PC-3 (cell line): ENCODE measurements at regions of chr3 and their contacts with region 1.

Region 1: GRCh38 chr3:125443923-125444322 is 68.8 kb upstream of the ZNF148 start:
- DNase-seq: peak; percentile 19
- ATAC-seq: peak; percentile 48
- H3K4me3 ChIP-seq: no peak overlapping the region
- H3K27ac ChIP-seq: no peak overlapping the region
- H3K4me1 ChIP-seq: 0 out of 2 replicates have a peak, but pooled peaks cover 2% of the 10 kb centered on the region
- H3K27me3 ChIP-seq: no peaks in the 10 kb centered on the region
- CTCF ChIP-seq: no peak

Region 2: DNA sequence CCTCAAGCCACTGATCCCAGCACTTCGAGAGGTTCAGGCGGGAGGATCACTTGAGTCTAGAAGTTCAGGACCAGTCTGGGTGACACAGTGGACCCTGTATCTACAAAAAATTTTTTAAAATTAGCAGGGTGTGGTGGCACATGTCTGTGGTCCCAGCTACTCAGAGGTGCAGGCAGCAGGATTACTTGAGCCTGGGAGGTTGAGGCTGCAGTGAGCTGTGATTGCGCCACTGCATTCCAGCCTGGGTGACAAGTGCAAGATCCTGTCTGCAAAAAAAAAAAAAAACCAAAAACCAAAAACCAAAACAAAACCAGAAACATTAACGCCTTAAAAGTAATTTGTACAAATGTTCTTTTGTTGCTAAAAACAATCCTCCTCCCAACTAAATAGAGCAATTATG is 203.4 kb before region 1 on chr3:
- CTCF ChIA-PET with region 1: no interaction called
- POLR2A ChIA-PET with region 1: no interaction called
- intact Hi-C with region 1: no loop called
- DNase-seq: no peak
- ATAC-seq: no peak
- H3K4me3 ChIP-seq: no peak overlapping the region
- H3K27ac ChIP-seq: no peak overlapping the region
- H3K4me1 ChIP-seq: no peaks in the 10 kb centered on the region
- H3K27me3 ChIP-seq: no peaks in the 10 kb centered on the region
- CTCF ChIP-seq: no peak

Region 3: DNA sequence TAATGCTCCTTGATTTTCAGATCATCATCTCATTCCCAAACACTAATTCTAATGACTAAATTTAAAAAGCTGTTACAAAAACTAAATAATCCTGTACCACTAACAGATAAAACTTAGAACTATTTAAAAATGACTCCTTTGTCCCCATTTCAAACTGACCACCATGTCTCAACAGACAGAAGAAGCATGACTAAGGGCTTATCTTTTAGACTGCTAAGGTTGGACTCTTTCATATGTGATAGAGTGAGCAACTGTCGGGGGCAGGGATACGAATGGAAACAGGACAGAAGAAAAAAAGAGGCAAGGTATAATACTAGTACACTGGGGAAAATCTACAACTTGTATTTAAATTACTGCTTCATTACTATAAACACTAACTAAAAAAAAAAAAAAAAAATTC is 52.8 kb after region 1 on chr3:
- CTCF ChIA-PET with region 1: no interaction called
- POLR2A ChIA-PET with region 1: no interaction called
- intact Hi-C with region 1: no loop called
- DNase-seq: no peak
- ATAC-seq: no peak
- H3K4me3 ChIP-seq: no peak overlapping the region
- H3K27ac ChIP-seq: no peak overlapping the region
- H3K4me1 ChIP-seq: peaks cover 5% of the 10 kb centered on the region; the same call in 1 of the 2 replicates
- H3K27me3 ChIP-seq: no peaks in the 10 kb centered on the region
- CTCF ChIP-seq: no peak

Region 4: GRCh38 chr3:125585595-125586223 is 141.8 kb after region 1 on chr3:
- CTCF ChIA-PET with region 1: interaction called, 5 read pairs
- POLR2A ChIA-PET with region 1: no interaction called
- intact Hi-C with region 1: loop called (anchors 10 kb)
- DNase-seq: peak; percentile 64
- ATAC-seq: peak; percentile 67
- H3K4me3 ChIP-seq: no peak overlapping the region
- H3K27ac ChIP-seq: no peak overlapping the region
- H3K4me1 ChIP-seq: no peaks in the 10 kb centered on the region; the same call in 1 of the 2 replicates
- H3K27me3 ChIP-seq: no peaks in the 10 kb centered on the region
- CTCF ChIP-seq: peak; percentile 78